MCF 10A (cell line): ENCODE measurements at regions of chr1 and their contacts with region 1.

Region 1: GRCh38 chr1:67735806-67736627 is 51.0 kb downstream of the GADD45A start:
- DNase-seq: peak; percentile 98
- H3K4me3 Mint-ChIP-seq: peak overlapping the region; percentile 64
- H3K27ac Mint-ChIP-seq: peak overlapping the region; percentile 96
- H3K4me1 Mint-ChIP-seq: peaks cover 34% of the 10 kb centered on the region
- H3K27me3 Mint-ChIP-seq: no peaks in the 10 kb centered on the region
- CTCF ChIP-seq: no peak

Region 2: GRCh38 chr1:67723620-67724019 is 12.4 kb before region 1 on chr1:
- CTCF ChIA-PET with region 1: interaction called, 8 read pairs
- POLR2A ChIA-PET with region 1: interaction called, 23 read pairs
- intact Hi-C with region 1: no loop called
- DNase-seq: peak; percentile 77
- H3K4me3 Mint-ChIP-seq: no peak overlapping the region
- H3K27ac Mint-ChIP-seq: no peak overlapping the region
- H3K4me1 Mint-ChIP-seq: peaks cover 16% of the 10 kb centered on the region
- H3K27me3 Mint-ChIP-seq: no peaks in the 10 kb centered on the region
- CTCF ChIP-seq: no peak

Region 3: GRCh38 chr1:67771749-67772148 is 35.7 kb after region 1 on chr1:
- CTCF ChIA-PET with region 1: no interaction called
- POLR2A ChIA-PET with region 1: no interaction called
- intact Hi-C with region 1: no loop called
- DNase-seq: no peak
- H3K4me3 Mint-ChIP-seq: no peak overlapping the region
- H3K27ac Mint-ChIP-seq: no peak overlapping the region
- H3K4me1 Mint-ChIP-seq: peaks cover 29% of the 10 kb centered on the region
- H3K27me3 Mint-ChIP-seq: no peaks in the 10 kb centered on the region
- CTCF ChIP-seq: no peak

Region 4: GRCh38 chr1:67861856-67862516 is 126.0 kb after region 1 on chr1:
- CTCF ChIA-PET with region 1: no interaction called
- POLR2A ChIA-PET with region 1: no interaction called
- intact Hi-C with region 1: no loop called
- DNase-seq: no peak
- H3K4me3 Mint-ChIP-seq: no peak overlapping the region
- H3K27ac Mint-ChIP-seq: no peak overlapping the region
- H3K4me1 Mint-ChIP-seq: no peaks in the 10 kb centered on the region
- H3K27me3 Mint-ChIP-seq: no peaks in the 10 kb centered on the region
- CTCF ChIP-seq: no peak